ENCODE measurements at regions of chr6 and their contacts with region 1.

Region 1: DNA sequence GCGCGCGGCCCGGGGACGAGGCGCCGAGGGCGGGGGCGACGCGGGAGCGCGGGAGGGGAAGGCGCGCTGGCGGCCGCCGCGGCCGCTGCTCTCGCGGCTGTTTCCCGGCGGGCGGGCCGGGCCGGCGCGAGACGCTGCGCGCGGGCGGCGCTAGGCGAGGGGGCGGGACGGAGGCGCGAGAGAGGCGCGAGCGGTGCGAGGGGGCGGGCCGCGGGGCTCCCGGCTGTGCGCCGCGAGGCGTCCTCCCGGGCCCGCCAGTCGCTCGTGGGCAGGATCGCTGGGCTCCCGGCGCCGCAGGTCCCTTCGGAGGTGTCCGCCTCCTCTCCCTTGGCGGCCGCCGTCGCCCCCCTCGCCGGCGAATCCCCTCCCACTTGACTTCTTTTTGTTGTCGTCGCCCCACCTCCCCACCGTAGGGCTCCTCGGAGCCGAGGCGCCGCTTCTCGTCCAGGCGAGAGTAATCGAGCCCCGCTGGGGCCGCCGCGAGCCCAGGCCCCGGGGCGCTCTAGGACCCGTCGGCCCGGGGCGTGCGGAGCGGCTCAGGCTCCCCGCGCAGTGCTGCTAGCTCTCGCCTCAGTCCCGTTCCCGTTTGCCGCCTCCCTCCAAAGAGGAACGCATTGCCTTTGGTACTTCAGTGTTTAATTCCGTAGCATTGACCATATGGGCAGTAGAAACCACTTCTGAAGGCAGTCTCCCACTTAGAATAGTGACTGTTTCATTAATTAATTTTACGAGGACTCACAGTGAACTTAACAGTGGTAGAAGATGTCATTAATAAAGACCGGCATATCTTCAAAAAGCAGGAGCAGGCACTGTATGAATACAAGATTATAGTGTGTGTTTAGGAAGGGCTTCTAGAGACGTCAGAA is at the start of gene RANBP9:
- DNase-seq: peak; percentile 95
- ATAC-seq: peak; percentile 84
- H3K4me3 Mint-ChIP-seq: peak within 1 kb of the TSS; percentile 98
- H3K27ac Mint-ChIP-seq: peak within 1 kb of the TSS; percentile 97
- H3K4me1 Mint-ChIP-seq: peaks cover 38% of the 10 kb centered on the region
- H3K27me3 Mint-ChIP-seq: no peaks in the 10 kb centered on the region
- total RNA-seq, gene RANBP9: 55.3 to 56.3 TPM

Region 2: DNA sequence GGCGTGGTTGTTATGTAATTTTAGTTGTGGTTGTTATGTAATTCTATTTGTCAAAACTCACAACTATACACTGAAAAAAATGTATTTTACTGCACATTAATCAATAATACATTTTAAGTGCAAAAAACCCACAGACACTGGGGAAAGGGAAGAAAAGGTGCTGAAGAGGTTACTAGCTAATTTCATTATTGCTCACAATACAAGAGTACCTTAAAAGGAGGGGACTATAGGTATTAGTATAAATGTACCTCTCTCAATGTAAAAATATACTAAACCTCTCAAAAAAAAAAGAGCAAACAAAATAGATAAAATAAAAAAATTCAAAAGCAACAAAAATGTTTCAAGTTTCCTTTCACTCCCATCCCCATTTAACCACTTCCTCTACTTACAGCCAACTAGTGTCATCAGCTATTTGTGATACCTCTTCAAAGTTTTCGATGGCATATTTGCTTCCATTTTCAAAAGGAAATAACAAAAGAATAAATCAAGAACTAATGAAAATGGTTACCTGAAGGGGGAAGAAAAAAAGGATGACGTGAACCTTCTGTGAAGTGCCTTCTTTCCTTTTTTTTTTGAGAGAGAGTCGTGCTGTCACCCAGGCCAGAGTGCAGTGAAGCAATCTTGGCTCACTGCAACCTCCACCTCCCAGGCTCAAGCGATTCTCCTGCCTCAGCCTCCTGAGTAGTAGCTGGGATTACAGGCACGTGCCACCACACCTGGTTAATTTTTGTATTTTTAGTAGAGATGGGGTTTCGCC is 30.5 kb before region 1 on chr6:
- POLR2A ChIA-PET with region 1: interaction called, 16 read pairs
- DNase-seq: no peak
- ATAC-seq: peak; percentile 83
- H3K4me3 Mint-ChIP-seq: peak overlapping the region; percentile 81
- H3K27ac Mint-ChIP-seq: peak overlapping the region; percentile 97
- H3K4me1 Mint-ChIP-seq: peaks cover 27% of the 10 kb centered on the region
- H3K27me3 Mint-ChIP-seq: no peaks in the 10 kb centered on the region

Region 3: GRCh38 chr6:13762611-13763441 is 50.9 kb after region 1 on chr6:
- POLR2A ChIA-PET with region 1: interaction called, 12 read pairs
- DNase-seq: peak; percentile 40
- ATAC-seq: peak; percentile 79
- H3K4me3 Mint-ChIP-seq: peak overlapping the region; percentile 81
- H3K27ac Mint-ChIP-seq: peak overlapping the region; percentile 78
- H3K4me1 Mint-ChIP-seq: peaks cover 45% of the 10 kb centered on the region
- H3K27me3 Mint-ChIP-seq: no peaks in the 10 kb centered on the region